Heart right ventricle (tissue), 16 donors: ENCODE measurements at regions of chr3 and their contacts with region 1.

Region 1: GRCh38 chr3:123028233-123028828 is 768 bp upstream of the SEMA5B start:
- DNase-seq: peak in 1 of 2 donors; percentile 46
- ATAC-seq: peak; percentile 7 to 62 (median 50)
- H3K4me3 ChIP-seq: peak overlapping the region; percentile 40 to 82 (median 68)
- H3K27ac ChIP-seq: peak overlapping the region in 7 of 10 donors; percentile 8 to 75 (median 53)
- H3K4me1 ChIP-seq: peaks cover 9 to 47% (median 30%) of the 10 kb centered on the region in 9 donors
- H3K27me3 ChIP-seq: peaks cover 0 to 82% (median 17%) of the 10 kb centered on the region in 7 donors
- CTCF ChIP-seq: peak; percentile 29 to 71 (median 55)

Region 2: DNA sequence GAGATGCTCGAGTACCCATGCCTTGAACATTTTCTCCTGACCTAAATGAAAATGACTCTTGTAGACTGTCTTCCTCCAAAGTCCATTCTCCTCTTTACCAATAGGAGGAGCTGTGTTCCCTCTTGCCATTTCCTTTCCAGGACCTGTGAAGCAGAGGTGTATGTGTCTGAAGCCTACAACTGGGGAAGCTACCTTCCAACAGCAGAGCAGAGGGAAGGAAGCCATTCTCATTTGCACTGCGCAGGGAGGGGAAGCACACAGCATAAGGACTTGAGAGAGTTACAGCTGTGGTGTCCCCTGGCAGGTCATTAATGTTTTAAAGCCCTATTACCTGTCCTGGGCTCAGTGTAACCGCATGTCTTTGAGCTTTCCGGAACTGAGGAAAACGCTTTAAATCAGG is 273.4 kb before region 1 on chr3:
- intact Hi-C with region 1: loop called in 2 of 10 experiments (anchors 5 to 10 kb)
- DNase-seq: no peak
- ATAC-seq: peak in 3 of 8 donors; percentile 12 to 58 (median 30)
- H3K4me3 ChIP-seq: no peak overlapping the region
- H3K27ac ChIP-seq: no peak overlapping the region
- H3K4me1 ChIP-seq: peaks cover 0 to 13% (median 0%) of the 10 kb centered on the region in 9 donors
- H3K27me3 ChIP-seq: no peaks in the 10 kb centered on the region
- CTCF ChIP-seq: peak; percentile 26 to 76 (median 55)

Region 3: GRCh38 chr3:122942937-122943827 is 85.1 kb before region 1 on chr3:
- intact Hi-C with region 1: loop called in 8 of 10 experiments (anchors 1 to 2 kb)
- DNase-seq: peak; percentile 72 to 73
- ATAC-seq: peak; percentile 75 to 92 (median 82)
- H3K4me3 ChIP-seq: no peak overlapping the region
- H3K27ac ChIP-seq: peak overlapping the region in 2 of 10 donors; percentile 22 to 48
- H3K4me1 ChIP-seq: peaks cover 0 to 52% (median 25%) of the 10 kb centered on the region in 9 donors
- H3K27me3 ChIP-seq: peaks cover 0 to 4% (median 0%) of the 10 kb centered on the region in 7 donors
- CTCF ChIP-seq: peak; percentile 66 to 96 (median 89)

Region 4: GRCh38 chr3:122982216-122983185 is 45.8 kb before region 1 on chr3:
- intact Hi-C with region 1: loop called in 1 of 10 experiments (anchors 5 kb)
- DNase-seq: peak; percentile 54
- ATAC-seq: peak in 5 of 8 donors; percentile 13 to 56 (median 28)
- H3K4me3 ChIP-seq: no peak overlapping the region
- H3K27ac ChIP-seq: peak overlapping the region in 2 of 10 donors; percentile 22 to 30
- H3K4me1 ChIP-seq: peaks cover 6 to 70% (median 30%) of the 10 kb centered on the region in 9 donors
- H3K27me3 ChIP-seq: no peaks in the 10 kb centered on the region
- CTCF ChIP-seq: peak in 5 of 9 donors; percentile 12 to 39 (median 25)

Region 5: DNA sequence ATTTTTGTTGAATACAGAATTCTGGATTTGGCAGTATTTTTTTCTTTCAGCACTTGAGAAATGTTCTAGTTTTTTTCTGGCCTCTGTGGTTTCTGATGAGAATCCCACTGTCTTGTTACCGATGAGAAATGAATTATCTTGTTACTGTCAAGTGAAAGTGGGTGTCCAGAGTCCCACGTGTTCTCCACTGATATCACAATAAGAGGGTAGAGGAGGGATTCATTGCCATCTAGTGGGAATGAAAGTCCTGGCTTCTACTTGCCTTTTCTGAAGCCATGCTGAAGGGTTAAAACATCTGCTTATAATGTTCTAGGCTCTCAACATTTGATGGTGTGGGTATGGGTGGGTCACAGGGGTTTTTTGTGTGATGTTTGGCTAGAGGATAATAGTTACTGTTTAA is 239.5 kb after region 1 on chr3:
- intact Hi-C with region 1: loop called in 1 of 10 experiments (anchors 10 kb)
- DNase-seq: no peak
- ATAC-seq: no peak
- H3K4me3 ChIP-seq: no peak overlapping the region
- H3K27ac ChIP-seq: no peak overlapping the region
- H3K4me1 ChIP-seq: peaks cover 0 to 28% (median 8%) of the 10 kb centered on the region in 9 donors
- H3K27me3 ChIP-seq: no peaks in the 10 kb centered on the region
- CTCF ChIP-seq: peak in 2 of 9 donors; percentile 12 to 24